ENCODE measurements at regions of chr21 and their contacts with region 1.

Region 1: GRCh38 chr21:20999659-21000058 is 1.4 kb downstream of the NCAM2 start:
- DNase-seq: no peak
- H3K4me3 ChIP-seq: peak overlapping the region; percentile 73
- H3K27ac ChIP-seq: peak overlapping the region; percentile 29
- H3K4me1 ChIP-seq: peaks cover 25% of the 10 kb centered on the region
- H3K27me3 ChIP-seq: peaks cover 44% of the 10 kb centered on the region
- CTCF ChIP-seq: peak; percentile 73

Region 2: GRCh38 chr21:20774737-20775136 is 224.9 kb before region 1 on chr21:
- intact Hi-C with region 1: no loop called
- DNase-seq: no peak
- H3K4me3 ChIP-seq: no peak overlapping the region
- H3K27ac ChIP-seq: no peak overlapping the region
- H3K4me1 ChIP-seq: no peaks in the 10 kb centered on the region
- H3K27me3 ChIP-seq: no peaks in the 10 kb centered on the region
- CTCF ChIP-seq: no peak

Region 3: DNA sequence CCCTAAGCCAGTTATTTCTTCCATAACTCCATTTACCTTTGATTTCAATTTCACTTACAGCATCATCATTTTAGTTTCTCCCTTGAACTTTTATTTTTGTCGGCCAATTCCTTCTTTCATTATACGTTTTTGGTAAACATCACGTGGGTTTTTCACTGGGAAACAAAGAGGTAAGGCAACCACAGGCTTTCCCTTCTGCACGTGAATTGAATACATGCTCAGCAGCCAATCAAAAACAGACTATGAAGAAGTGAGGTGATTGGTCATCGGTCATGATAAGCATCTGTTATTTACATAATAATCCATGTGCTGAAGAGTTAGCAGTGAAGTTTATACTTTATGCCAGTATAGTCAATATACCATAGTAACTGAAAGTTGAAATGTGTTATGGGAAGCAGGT is 97.3 kb after region 1 on chr21:
- intact Hi-C with region 1: loop called (anchors 10 kb)
- DNase-seq: no peak
- H3K4me3 ChIP-seq: no peak overlapping the region
- H3K27ac ChIP-seq: no peak overlapping the region
- H3K4me1 ChIP-seq: no peaks in the 10 kb centered on the region
- H3K27me3 ChIP-seq: no peaks in the 10 kb centered on the region
- CTCF ChIP-seq: no peak

Region 4: DNA sequence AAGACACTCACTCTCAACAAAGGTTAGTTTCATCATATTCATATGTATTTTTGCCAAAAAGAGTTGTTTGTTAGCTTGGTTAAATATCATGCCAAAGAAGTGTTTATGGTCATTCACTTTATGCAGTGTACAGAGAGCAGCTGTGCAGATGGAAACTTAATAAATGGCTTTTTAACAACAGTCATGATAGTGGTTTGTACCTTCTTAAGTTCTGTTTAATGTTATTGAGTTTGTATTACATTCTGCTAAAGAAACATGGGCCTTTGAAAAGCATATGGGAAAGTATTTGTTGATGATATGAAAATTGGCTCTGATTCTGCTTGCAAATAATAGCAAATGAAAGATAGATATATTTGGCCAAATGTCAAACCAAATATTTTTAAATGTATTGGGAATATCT is 605.9 kb after region 1 on chr21:
- intact Hi-C with region 1: no loop called
- DNase-seq: no peak
- H3K4me3 ChIP-seq: no peak overlapping the region
- H3K27ac ChIP-seq: peak overlapping the region; percentile 58
- H3K4me1 ChIP-seq: no peaks in the 10 kb centered on the region
- H3K27me3 ChIP-seq: no peaks in the 10 kb centered on the region
- CTCF ChIP-seq: no peak